ENCODE measurements at regions of chr4 and their contacts with region 1.

Region 1: DNA sequence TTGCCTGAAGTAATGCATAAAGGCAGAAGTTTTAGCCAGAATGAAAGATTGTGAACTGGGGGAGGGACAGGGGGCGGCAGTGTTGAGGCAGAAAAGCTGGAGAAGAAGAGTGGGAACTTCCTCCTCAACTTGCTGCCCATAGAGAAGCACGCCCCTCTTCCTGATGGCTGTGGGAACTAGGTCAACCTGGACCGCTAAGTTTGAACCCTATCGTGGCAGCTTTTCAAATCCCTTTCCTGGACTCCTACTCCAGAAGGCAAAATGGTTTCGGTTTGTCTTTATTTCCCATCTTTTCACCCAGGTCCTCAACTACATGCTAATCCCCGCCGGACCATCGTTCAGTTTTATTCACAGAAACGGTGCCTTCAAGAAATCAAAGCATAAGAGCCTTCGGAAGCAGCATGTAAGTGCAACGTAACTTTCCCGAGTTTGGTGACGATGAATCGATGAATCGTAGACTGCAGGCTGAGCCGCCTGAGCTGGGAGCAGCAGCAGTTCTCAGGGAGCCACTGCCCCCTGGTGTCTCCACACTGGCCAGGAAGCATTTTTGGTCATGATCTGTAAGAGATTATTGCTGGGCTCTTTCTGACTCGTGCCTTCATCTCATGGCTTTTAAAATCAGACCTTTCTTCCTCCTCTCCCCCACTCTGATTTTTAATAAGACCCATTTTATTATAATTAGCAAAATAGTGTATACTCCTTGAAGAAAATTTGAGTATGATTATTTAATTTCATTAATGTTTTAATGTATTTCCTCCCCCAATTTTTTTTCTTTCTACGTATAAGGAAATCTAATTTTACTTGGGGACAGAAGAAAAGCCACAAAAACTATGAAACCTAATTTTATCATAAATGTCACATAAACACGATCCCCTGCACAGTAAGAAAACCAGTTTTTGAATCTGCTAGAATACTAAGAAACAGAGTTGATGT is 21.4 kb downstream of the SPINK2 start:
- DNase-seq: peak; percentile 77
- H3K4me3 Mint-ChIP-seq: peak overlapping the region; percentile 84
- H3K27ac Mint-ChIP-seq: no peak overlapping the region
- H3K4me1 Mint-ChIP-seq: peaks cover 31% of the 10 kb centered on the region
- H3K27me3 Mint-ChIP-seq: peaks cover 27% of the 10 kb centered on the region

Region 2: DNA sequence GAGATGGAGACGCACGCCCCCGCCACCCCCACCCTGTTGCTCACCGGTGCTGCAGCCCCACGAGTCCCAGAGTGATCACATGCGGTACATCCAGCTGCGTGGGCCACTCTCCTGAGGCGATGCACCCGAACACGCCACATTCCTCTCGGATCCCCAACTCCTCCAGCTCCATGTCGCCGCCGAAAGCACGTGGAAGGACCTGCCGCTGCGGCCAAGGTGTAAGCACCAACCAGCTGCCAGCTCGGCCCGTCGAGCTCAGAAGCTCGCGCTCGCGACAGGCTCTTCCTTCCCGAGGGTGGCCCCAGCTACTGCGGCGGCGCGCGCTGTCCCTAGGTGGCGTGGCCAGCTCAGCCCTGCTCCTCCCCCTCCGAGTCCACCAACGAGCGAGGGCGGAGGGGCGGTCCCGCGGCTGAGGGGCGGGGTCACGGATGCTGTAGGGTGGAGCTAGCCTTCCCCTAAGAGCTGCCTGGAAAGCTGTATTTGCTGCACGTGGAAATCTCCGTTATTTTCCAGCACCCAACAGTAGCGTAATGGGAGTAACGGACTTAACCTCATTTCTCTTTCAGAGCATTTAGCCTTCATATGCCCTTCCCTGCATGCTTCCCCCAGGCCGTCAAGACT is 364.7 kb before region 1 on chr4 and contains the start of gene PPAT:
- intact Hi-C with region 1: loop called (anchors 5 kb)
- DNase-seq: peak; percentile 97
- H3K4me3 Mint-ChIP-seq: peak within 1 kb of the TSS; percentile 98
- H3K27ac Mint-ChIP-seq: peak within 1 kb of the TSS; percentile 98
- H3K4me1 Mint-ChIP-seq: peaks cover 44% of the 10 kb centered on the region
- H3K27me3 Mint-ChIP-seq: no peaks in the 10 kb centered on the region
- total RNA-seq, gene PPAT: 43.4 and 46.2 TPM in 2 replicates

Region 3: GRCh38 chr4:56575820-56576429 is 224.2 kb before region 1 on chr4:
- intact Hi-C with region 1: loop called (anchors 1 kb)
- DNase-seq: no peak
- H3K4me3 Mint-ChIP-seq: no peak overlapping the region
- H3K27ac Mint-ChIP-seq: no peak overlapping the region
- H3K4me1 Mint-ChIP-seq: no peaks in the 10 kb centered on the region
- H3K27me3 Mint-ChIP-seq: peaks cover 11% of the 10 kb centered on the region

Region 4: GRCh38 chr4:56681158-56681852 is 118.8 kb before region 1 on chr4 and contains the start of gene HOPX:
- intact Hi-C with region 1: loop called (anchors 2 kb)
- DNase-seq: peak; percentile 17
- H3K4me3 Mint-ChIP-seq: peak within 1 kb of the TSS; percentile 28
- H3K27ac Mint-ChIP-seq: peak within 1 kb of the TSS; percentile 36
- H3K4me1 Mint-ChIP-seq: peaks cover 25% of the 10 kb centered on the region
- H3K27me3 Mint-ChIP-seq: peaks cover 59% of the 10 kb centered on the region
- total RNA-seq, gene HOPX: 58.8 and 60.2 TPM in 2 replicates

Region 5: GRCh38 chr4:56757821-56758411 is 42.2 kb before region 1 on chr4:
- intact Hi-C with region 1: loop called (anchors 5 kb)
- DNase-seq: peak; percentile 70
- H3K4me3 Mint-ChIP-seq: peak overlapping the region; percentile 61
- H3K27ac Mint-ChIP-seq: peak overlapping the region; percentile 95
- H3K4me1 Mint-ChIP-seq: peaks cover 47% of the 10 kb centered on the region
- H3K27me3 Mint-ChIP-seq: peaks cover 11% of the 10 kb centered on the region

Region 6: GRCh38 chr4:56861365-56861764 is 61.3 kb after region 1 on chr4:
- intact Hi-C with region 1: loop called (anchors 2 kb)
- DNase-seq: no peak
- H3K4me3 Mint-ChIP-seq: no peak overlapping the region
- H3K27ac Mint-ChIP-seq: no peak overlapping the region
- H3K4me1 Mint-ChIP-seq: peaks cover 12% of the 10 kb centered on the region
- H3K27me3 Mint-ChIP-seq: peaks cover 21% of the 10 kb centered on the region

Measured in activated T-helper 2 cell treated with anti-CD3 and anti-CD28 coated beads, Interferon-gamma antibody, Interleukin-2, Interleukin-4, amounts not matched to agents 10 μg/mL and 5 μg/mL and 100 μg/mL, durations not matched to agents 14 hours and 24 hours and 36 hours (primary cell).